Caki2 (cell line): ENCODE measurements at regions of chr2 and their contacts with region 1.

Region 1: DNA sequence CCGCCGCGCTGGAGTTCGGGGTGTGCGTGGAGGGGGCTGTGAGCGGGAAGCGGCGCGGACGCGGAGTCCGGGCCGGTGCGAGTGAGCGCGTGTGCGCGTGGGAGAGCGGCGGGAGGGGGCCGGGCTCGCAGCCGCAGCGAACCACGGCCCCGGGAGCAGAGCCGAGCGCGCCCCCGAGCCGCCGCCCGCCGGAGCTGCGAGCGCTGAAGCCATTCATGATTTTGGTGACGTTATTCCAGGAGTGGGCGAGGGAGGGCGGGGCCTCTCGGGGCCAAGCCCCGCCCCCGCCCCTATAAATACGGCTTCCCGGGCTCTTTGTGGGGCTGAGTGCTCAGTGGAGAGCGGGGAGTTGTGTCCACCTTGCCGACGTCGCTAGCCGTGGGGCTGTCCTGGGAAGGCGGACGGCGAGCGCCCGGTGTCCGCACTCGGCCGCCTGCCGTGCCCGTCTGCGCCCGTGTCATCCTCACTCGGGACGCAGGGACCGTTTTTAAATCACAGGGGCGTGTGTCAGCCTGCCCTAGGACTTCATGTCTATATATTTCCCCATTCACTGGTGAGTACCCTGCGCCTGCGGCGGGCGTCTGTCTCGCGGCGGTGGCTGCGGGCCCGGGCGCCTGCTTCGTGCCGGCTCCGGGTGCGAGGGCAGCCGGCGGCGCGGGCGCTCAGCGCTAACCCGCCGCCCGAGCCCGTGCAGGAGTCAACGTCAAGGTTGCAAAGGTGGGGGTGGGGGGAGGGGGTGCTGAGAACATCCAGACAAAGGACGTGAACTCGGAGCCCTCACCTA is at the start of gene LBH:
- DNase-seq: peak; percentile 91
- total RNA-seq, gene LBH: 99.1 and 128 TPM in 2 replicates

Region 2: DNA sequence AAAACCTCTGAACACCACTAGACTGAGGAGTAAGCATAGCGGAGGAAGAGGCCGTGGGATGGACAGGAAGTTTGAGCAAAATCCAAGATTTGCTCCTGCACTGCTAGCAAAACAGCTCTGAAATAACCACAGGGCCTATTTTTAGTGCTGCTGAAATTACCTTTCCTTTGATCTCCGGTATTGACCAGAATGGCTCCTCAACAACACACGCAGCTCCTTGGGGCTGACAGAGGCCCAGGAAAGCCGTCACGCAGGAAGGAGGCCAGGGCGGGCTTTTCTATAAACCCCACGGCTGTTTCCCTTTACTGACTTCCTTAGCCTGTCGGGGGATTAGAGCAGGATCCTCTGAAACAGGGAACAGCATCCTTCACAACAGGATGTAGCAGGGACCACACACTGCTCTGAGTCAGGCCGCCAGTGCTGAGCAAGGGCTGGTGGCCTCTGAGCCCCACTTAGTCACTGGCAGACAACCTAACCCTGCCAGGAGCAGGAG is 134.8 kb after region 1 on chr2:
- in situ Hi-C with region 1: loop called (anchors 10 kb)
- DNase-seq: no peak